ENCODE measurements at regions of chr11 and their contacts with region 1.

Region 1: GRCh38 chr11:73661035-73661628 is 14.8 kb downstream of the PLEKHB1 start:
- DNase-seq: peak; percentile 95
- H3K4me3 ChIP-seq: peak overlapping the region; percentile 42
- H3K27ac ChIP-seq: no peak overlapping the region
- H3K4me1 ChIP-seq: no peaks in the 10 kb centered on the region
- H3K27me3 ChIP-seq: no peaks in the 10 kb centered on the region
- CTCF ChIP-seq: peak; percentile 100

Region 2: DNA sequence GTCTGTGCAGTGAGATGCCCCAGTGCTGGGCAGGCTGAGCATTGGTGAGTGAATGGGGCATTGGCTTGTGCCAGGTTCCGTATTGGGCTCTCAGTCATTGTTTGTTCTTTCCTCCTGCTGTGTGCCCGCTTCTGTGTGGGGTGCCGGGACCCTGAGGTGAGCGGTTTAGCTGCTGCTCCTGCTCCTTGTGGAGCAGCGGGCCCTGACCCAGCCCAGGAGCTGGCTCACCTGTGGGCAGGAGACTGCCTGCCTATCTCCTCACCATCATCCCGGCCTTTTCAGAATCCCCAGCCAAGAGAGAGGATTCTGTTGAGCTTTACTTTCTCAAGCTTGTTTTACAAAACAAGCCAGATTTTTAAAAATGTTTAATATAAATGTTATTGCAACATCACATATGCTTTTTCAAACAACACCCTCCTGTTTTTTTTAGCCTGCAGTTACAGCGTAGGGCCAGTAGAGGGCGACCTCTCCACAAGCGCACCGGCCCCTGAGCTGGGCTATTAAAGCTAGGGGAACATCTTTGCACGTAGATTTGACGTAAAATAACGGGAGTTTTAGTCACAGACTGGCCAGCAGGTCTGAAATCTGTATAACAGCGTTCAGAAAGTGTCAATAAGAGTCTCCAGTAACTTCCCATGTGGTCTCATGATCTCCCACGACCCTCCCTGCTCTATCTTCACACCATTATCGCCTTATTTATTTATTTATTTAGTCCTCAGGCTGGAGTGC is 310.1 kb before region 1 on chr11:
- CTCF ChIA-PET with region 1: interaction called, 19 read pairs
- POLR2A ChIA-PET with region 1: no interaction called
- intact Hi-C with region 1: loop called (anchors 1 kb)
- DNase-seq: peak; percentile 87
- H3K4me3 ChIP-seq: no peak overlapping the region
- H3K27ac ChIP-seq: no peak overlapping the region
- H3K4me1 ChIP-seq: no peaks in the 10 kb centered on the region
- H3K27me3 ChIP-seq: no peaks in the 10 kb centered on the region
- CTCF ChIP-seq: peak; percentile 100

Region 3: DNA sequence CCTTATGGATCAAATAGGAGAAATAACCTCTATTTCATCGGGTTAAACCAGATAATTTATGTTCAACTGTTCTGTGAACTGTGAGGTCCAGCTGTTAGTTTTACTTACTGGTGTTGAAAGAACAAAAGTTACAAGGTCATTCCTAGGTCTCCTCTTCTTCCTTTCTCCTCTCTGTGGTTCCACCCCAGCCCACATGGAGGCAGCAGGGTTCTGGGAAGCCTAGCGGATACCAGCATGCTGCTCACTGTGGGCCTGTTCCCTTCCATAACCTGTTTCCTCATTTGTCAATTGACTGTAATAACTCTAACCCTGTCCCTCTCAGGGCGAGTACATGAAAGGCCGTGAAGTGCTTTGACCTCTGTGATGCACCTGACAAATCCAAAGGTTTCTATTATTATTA is 257.1 kb before region 1 on chr11:
- CTCF ChIA-PET with region 1: interaction called, 3 read pairs
- POLR2A ChIA-PET with region 1: no interaction called
- intact Hi-C with region 1: loop called (anchors 2 kb)
- DNase-seq: peak; percentile 81
- H3K4me3 ChIP-seq: no peak overlapping the region
- H3K27ac ChIP-seq: no peak overlapping the region
- H3K4me1 ChIP-seq: no peaks in the 10 kb centered on the region
- H3K27me3 ChIP-seq: no peaks in the 10 kb centered on the region
- CTCF ChIP-seq: peak; percentile 76

Region 4: DNA sequence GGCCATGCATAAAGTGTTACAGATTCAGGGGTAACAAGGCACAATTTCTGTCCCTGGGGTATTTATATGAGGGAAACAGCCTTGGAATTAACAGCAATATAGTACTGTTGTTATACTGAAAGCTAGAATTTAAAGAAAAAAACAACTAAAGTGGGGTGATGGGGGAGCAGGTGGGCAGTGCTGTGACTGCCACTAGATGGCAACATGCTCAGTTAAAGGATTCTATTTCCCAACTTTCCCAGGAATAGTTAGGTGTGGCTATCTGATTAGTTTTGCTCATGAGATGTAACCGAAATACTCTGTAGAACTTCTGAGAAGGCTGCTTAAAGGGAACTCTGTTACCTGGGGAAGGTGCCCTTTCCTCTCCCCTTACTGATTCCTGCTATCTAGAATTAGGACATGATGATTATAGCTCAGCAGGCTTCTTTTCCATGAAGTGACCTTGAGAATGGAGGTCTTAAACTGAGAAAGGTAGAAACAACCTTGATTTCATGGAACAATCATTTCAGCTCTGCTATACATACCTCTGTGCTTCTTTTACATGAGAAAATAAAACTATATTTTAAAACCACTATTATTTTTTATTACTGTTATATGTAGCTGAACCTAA is 182.3 kb before region 1 on chr11:
- CTCF ChIA-PET with region 1: interaction called, 10 read pairs
- POLR2A ChIA-PET with region 1: no interaction called
- intact Hi-C with region 1: loop called (anchors 2 kb)
- DNase-seq: peak; percentile 67
- H3K4me3 ChIP-seq: no peak overlapping the region
- H3K27ac ChIP-seq: no peak overlapping the region
- H3K4me1 ChIP-seq: peaks cover 26% of the 10 kb centered on the region
- H3K27me3 ChIP-seq: no peaks in the 10 kb centered on the region
- CTCF ChIP-seq: peak; percentile 99

Region 5: GRCh38 chr11:73625696-73626318 is 35.3 kb before region 1 on chr11:
- CTCF ChIA-PET with region 1: interaction called, 28 read pairs
- POLR2A ChIA-PET with region 1: interaction called, 3 read pairs
- intact Hi-C with region 1: loop called (anchors 1 kb)
- DNase-seq: peak; percentile 87
- H3K4me3 ChIP-seq: peak overlapping the region; percentile 20
- H3K27ac ChIP-seq: no peak overlapping the region
- H3K4me1 ChIP-seq: no peaks in the 10 kb centered on the region
- H3K27me3 ChIP-seq: no peaks in the 10 kb centered on the region
- CTCF ChIP-seq: peak; percentile 94

Region 6: GRCh38 chr11:73931039-73931645 is 270.0 kb after region 1 on chr11:
- CTCF ChIA-PET with region 1: interaction called, 11 read pairs
- POLR2A ChIA-PET with region 1: no interaction called
- intact Hi-C with region 1: loop called (anchors 10 kb)
- DNase-seq: peak; percentile 90
- H3K4me3 ChIP-seq: no peak overlapping the region
- H3K27ac ChIP-seq: no peak overlapping the region
- H3K4me1 ChIP-seq: peaks cover 5% of the 10 kb centered on the region
- H3K27me3 ChIP-seq: no peaks in the 10 kb centered on the region
- CTCF ChIP-seq: peak; percentile 74